ENCODE measurements at regions of chr15 and their contacts with region 1.

Region 1: DNA sequence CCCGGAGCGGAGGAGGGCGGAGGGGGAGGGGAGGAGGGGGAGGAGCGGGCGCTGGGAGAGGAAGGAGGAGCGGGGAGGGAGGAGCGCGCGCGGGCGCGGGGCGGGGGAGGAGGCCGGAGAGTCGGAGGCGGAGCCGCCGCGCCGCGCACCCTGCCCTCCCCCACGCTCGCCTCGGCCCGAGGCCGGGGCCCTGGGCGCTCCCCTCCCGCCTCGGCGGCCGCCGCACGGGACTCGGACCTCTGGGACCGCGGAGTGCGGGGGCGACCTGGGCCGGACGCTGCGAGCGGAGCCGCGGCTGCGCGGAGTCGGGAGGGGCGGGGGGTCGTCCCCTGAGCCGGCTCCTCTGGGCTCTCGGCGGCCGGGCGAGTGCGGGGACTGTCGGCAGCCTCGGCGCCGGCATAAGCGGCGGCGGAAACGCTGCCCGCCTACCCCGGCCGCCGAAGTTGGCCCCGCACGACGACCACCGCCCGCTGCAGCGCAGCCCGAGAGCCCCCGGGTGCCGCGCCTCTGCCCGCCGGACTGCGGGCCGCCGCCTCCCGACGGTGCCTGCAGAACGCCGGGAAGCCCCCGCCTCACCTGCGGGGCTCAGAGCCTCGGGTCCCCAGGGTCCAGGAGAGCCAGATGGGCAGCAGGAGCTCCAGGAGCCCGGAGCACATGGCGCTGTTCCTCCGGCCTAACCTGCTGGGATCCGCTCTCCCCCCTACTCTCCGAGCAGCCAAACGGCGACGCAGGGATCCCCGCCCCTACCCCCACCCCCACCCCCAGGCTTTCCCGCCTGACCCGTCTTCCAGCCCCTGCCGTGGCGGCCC is 407 bp upstream of the GABRB3 start:
- DNase-seq: peak in 8 of 10 donors; percentile 32 to 88 (median 66)
- H3K4me3 ChIP-seq: peak overlapping the region; percentile 18 to 78 (median 62)
- H3K27ac ChIP-seq: peak overlapping the region in 48 of 59 donors; percentile 8 to 91 (median 68)
- H3K27me3 ChIP-seq: peaks cover 0 to 47% (median 0%) of the 10 kb centered on the region in 45 donors
- CTCF ChIP-seq: no peak

Region 2: GRCh38 chr15:26070095-26070532 is 703.2 kb before region 1 on chr15:
- intact Hi-C with region 1: no loop called
- DNase-seq: peak in 7 of 10 donors; percentile 46 to 81 (median 68)
- H3K4me3 ChIP-seq: peak overlapping the region in 6 of 59 donors; percentile 5 to 24 (median 15)
- H3K27ac ChIP-seq: peak overlapping the region in 42 of 59 donors; percentile 6 to 96 (median 74)
- H3K27me3 ChIP-seq: no peaks in the 10 kb centered on the region
- CTCF ChIP-seq: no peak

Region 3: GRCh38 chr15:26716069-26716468 is 57.2 kb before region 1 on chr15:
- intact Hi-C with region 1: loop called (anchors 5 kb)
- DNase-seq: no peak
- H3K4me3 ChIP-seq: no peak overlapping the region
- H3K27ac ChIP-seq: peak overlapping the region in 20 of 59 donors; percentile 9 to 78 (median 50)
- H3K27me3 ChIP-seq: no peaks in the 10 kb centered on the region
- CTCF ChIP-seq: no peak

Region 4: GRCh38 chr15:26722621-26723160 is 50.6 kb before region 1 on chr15:
- intact Hi-C with region 1: loop called (anchors 5 kb)
- DNase-seq: peak in 4 of 10 donors; percentile 43 to 68 (median 56)
- H3K4me3 ChIP-seq: no peak overlapping the region
- H3K27ac ChIP-seq: peak overlapping the region in 7 of 59 donors; percentile 5 to 63 (median 34)
- H3K27me3 ChIP-seq: no peaks in the 10 kb centered on the region
- CTCF ChIP-seq: no peak